CD8-positive, alpha-beta T cell (primary cell): ENCODE measurements at regions of chr17 and their contacts with region 1.

Region 1: GRCh38 chr17:58658804-58659713 is 32.8 kb downstream of the TEX14 start:
- DNase-seq: peak; percentile 56 to 95 (median 80)
- ATAC-seq: peak; percentile 83
- H3K4me3 ChIP-seq: peak overlapping the region; percentile 40 to 41
- H3K4me3 Mint-ChIP-seq: peak overlapping the region; percentile 77
- H3K27ac ChIP-seq: peak overlapping the region; percentile 91 to 96
- H3K27ac Mint-ChIP-seq: peak overlapping the region; percentile 100
- H3K4me1 ChIP-seq: no peaks in the 10 kb centered on the region
- H3K4me1 Mint-ChIP-seq: peaks cover 17% of the 10 kb centered on the region
- H3K27me3 ChIP-seq: no peaks in the 10 kb centered on the region
- H3K27me3 Mint-ChIP-seq: no peaks in the 10 kb centered on the region
- CTCF ChIP-seq: no peak

Region 2: DNA sequence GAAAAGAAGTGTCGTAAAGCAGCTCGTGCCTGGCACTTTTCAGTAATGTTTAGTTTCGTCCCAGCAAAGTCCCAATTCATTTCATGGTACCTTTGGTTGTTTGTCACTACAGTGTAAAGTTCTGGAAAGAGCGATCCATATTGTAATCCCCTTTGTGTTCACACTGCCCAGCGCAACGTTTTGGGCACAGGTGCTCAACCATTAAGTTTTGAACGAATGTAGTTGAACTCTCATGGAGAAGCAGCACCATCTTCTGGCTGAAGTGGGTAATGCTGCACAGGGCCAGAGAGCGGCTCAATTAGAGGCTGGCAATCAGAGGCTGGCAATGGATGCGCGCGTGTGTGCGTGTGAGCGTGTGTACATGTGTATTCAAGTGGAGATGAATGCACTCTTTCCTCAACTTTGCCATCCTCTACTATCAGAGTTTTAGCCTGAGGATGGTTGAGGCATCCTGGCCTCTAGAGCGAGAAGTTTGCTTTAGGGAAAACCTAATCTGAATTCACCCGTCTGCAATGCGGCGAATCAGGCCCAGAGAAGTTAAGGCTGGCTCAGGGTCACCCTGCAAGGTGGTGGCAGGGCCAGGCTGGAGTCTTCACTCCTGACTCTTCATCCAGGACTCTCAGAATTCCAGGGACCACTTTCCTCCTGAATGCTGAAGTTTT is 546.0 kb before region 1 on chr17:
- CTCF ChIA-PET with region 1: no interaction called
- POLR2A ChIA-PET with region 1: no interaction called
- intact Hi-C with region 1: no loop called
- DNase-seq: peak; percentile 76 to 89 (median 83)
- ATAC-seq: peak; percentile 99
- H3K4me3 ChIP-seq: no peak overlapping the region
- H3K4me3 Mint-ChIP-seq: no peak overlapping the region
- H3K27ac ChIP-seq: no peak overlapping the region
- H3K27ac Mint-ChIP-seq: no peak overlapping the region
- H3K4me1 ChIP-seq: no peaks in the 10 kb centered on the region
- H3K4me1 Mint-ChIP-seq: peaks cover 5% of the 10 kb centered on the region
- H3K27me3 ChIP-seq: no peaks in the 10 kb centered on the region
- H3K27me3 Mint-ChIP-seq: peaks cover 24% of the 10 kb centered on the region
- CTCF ChIP-seq: peak; percentile 96

Region 3: GRCh38 chr17:58631523-58632323 is 27.3 kb before region 1 on chr17:
- CTCF ChIA-PET with region 1: no interaction called
- POLR2A ChIA-PET with region 1: interaction called, 20 read pairs
- intact Hi-C with region 1: loop called (anchors 1 kb)
- DNase-seq: peak; percentile 84 to 97 (median 91)
- ATAC-seq: peak; percentile 88
- H3K4me3 ChIP-seq: peak overlapping the region; percentile 48 to 50
- H3K4me3 Mint-ChIP-seq: no peak overlapping the region
- H3K27ac ChIP-seq: peak overlapping the region; percentile 95 to 97
- H3K27ac Mint-ChIP-seq: no peak overlapping the region
- H3K4me1 ChIP-seq: peaks cover 13% of the 10 kb centered on the region
- H3K4me1 Mint-ChIP-seq: peaks cover 2% of the 10 kb centered on the region
- H3K27me3 ChIP-seq: no peaks in the 10 kb centered on the region
- H3K27me3 Mint-ChIP-seq: no peaks in the 10 kb centered on the region
- CTCF ChIP-seq: no peak

Region 4: GRCh38 chr17:58677194-58677880 is 18.3 kb after region 1 on chr17:
- CTCF ChIA-PET with region 1: no interaction called
- POLR2A ChIA-PET with region 1: no interaction called
- intact Hi-C with region 1: no loop called
- DNase-seq: no peak
- ATAC-seq: no peak
- H3K4me3 ChIP-seq: no peak overlapping the region
- H3K4me3 Mint-ChIP-seq: no peak overlapping the region
- H3K27ac ChIP-seq: no peak overlapping the region
- H3K27ac Mint-ChIP-seq: no peak overlapping the region
- H3K4me1 ChIP-seq: no peaks in the 10 kb centered on the region
- H3K4me1 Mint-ChIP-seq: no peaks in the 10 kb centered on the region
- H3K27me3 ChIP-seq: no peaks in the 10 kb centered on the region
- H3K27me3 Mint-ChIP-seq: peaks cover 9% of the 10 kb centered on the region
- CTCF ChIP-seq: no peak